Endothelial cell of umbilical vein (primary cell): ENCODE measurements at regions of chr19 and their contacts with region 1.

Region 1: GRCh38 chr19:33406521-33407139 is 33.1 kb downstream of the CEBPG start:
- DNase-seq: peak; percentile 57
- H3K4me3 ChIP-seq: no peak overlapping the region
- H3K27ac ChIP-seq: no peak overlapping the region
- H3K4me1 ChIP-seq: no peaks in the 10 kb centered on the region
- H3K27me3 ChIP-seq: no peaks in the 10 kb centered on the region
- CTCF ChIP-seq: peak; percentile 85 to 89
- POLR2A ChIP-seq: no peak

Region 2: DNA sequence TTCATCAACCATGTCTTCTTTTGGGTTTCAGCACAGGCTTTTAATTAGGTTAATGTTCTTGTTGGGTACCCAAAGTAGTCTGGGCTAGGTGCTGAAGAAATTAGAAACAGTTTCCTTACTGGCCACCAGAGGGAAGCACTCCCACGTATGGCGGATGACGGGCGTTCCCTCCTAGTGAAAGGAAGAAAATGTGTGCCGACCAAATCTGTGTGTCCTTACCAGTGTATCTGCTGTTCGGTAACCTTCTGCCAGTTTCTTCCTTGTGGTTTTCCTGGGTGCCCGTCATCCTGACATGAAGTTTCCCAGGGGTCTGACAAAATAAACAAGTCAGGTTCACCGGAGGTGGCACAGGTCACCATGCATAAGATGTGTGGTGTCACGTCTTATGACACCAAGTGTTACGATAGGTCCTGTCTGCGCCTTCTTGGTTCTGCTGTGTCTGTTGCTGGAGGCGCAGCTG is 280.7 kb before region 1 on chr19:
- CTCF ChIA-PET with region 1: interaction called, 15 read pairs
- POLR2A ChIA-PET with region 1: no interaction called
- dilution Hi-C with region 1: no loop called
- intact Hi-C with region 1: loop called (anchors 5 kb)
- DNase-seq: peak; percentile 73
- H3K4me3 ChIP-seq: no peak overlapping the region
- H3K27ac ChIP-seq: no peak overlapping the region
- H3K4me1 ChIP-seq: no peaks in the 10 kb centered on the region
- H3K27me3 ChIP-seq: no peaks in the 10 kb centered on the region
- CTCF ChIP-seq: peak; percentile 83 to 87
- POLR2A ChIP-seq: no peak

Region 3: DNA sequence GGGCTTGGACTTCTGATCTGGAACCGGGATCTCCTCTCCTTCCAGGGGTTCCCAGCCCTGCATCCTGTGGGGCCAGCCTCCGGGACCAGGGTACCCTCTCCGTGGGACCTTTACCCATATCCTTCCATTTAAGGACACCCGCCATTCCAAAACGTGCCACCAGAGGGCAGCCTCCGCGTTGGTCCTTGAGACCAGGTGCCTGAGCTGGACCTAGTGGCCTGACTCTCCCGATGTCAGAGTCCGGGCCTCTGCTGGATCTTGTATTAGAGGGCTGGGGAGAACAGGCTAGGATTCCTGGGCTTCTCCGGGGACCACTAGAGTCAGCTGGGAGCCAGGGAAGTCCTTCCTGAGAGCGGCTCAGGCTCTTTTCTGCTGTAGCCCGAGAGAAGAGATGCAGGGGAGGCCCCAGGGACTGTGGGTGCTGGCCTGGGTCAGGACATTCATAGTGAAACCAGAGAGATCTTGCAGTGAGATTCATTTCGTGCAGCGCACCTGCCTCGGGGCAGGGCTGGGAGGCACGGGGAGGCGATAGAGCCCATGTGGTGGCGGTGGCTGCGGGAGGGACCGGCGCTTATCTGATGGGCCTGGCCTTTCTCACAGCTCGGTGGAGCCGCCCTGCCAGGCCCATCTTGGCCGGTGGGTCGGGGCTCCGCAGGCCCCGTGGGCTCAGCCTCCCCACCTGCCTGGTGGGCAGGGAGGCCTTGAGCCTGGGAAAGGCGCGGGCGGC is 171.2 kb before region 1 on chr19:
- CTCF ChIA-PET with region 1: interaction called, 181 read pairs
- POLR2A ChIA-PET with region 1: no interaction called
- dilution Hi-C with region 1: no loop called
- intact Hi-C with region 1: loop called (anchors 1 kb)
- DNase-seq: peak; percentile 57
- H3K4me3 ChIP-seq: no peak overlapping the region
- H3K27ac ChIP-seq: no peak overlapping the region
- H3K4me1 ChIP-seq: no peaks in the 10 kb centered on the region
- H3K27me3 ChIP-seq: no peaks in the 10 kb centered on the region
- CTCF ChIP-seq: peak; percentile 84 to 89
- POLR2A ChIP-seq: no peak

Region 4: GRCh38 chr19:33280351-33280921 is 126.2 kb before region 1 on chr19:
- CTCF ChIA-PET with region 1: no interaction called
- POLR2A ChIA-PET with region 1: no interaction called
- dilution Hi-C with region 1: no loop called
- intact Hi-C with region 1: no loop called
- DNase-seq: no peak
- H3K4me3 ChIP-seq: no peak overlapping the region
- H3K27ac ChIP-seq: no peak overlapping the region
- H3K4me1 ChIP-seq: no peaks in the 10 kb centered on the region
- H3K27me3 ChIP-seq: no peaks in the 10 kb centered on the region
- CTCF ChIP-seq: no peak
- POLR2A ChIP-seq: no peak

Region 5: DNA sequence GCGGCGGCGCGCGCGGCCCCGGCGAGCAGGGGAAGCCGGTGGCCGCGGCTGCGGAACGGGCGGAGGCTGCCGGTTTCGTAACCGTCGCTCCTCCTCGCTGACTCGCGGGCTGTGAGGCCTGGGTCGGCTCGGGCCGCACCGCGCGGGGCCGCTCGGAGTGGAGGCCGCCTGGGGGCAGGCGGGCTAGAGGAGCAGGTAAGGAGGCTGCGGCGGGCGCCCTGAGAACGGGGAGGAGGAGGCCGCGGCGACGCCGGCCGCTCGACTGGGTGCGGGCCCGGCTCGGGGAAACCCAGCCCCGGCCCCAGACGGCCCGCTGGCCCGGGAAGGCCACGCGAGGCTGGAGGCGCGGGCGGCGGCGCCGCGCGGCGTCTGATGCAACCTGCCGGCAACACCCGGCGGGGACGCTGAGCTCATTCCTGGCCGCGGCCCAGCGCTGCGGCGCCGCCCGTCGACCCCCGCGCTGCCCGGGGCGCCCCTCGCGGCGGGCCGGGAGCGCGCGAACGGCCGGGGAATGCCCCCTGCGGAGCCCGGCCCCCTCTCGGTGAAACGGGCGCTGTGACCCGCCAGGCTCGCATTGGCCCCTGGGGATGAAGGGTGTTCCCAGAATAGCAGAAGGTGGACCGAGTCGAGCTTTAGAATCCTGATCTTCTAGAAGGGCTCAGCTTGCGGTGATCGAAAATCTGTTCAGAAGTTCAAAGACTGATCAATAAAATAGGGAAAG is 32.8 kb before region 1 on chr19 and contains the start of gene CEBPG:
- CTCF ChIA-PET with region 1: interaction called, 13 read pairs
- POLR2A ChIA-PET with region 1: no interaction called
- dilution Hi-C with region 1: no loop called
- intact Hi-C with region 1: loop called (anchors 2 kb)
- DNase-seq: peak; percentile 54
- H3K4me3 ChIP-seq: peak within 1 kb of the TSS; percentile 81 to 97 (median 94)
- H3K27ac ChIP-seq: peak within 1 kb of the TSS; percentile 96
- H3K4me1 ChIP-seq: peaks cover 46% of the 10 kb centered on the region
- H3K27me3 ChIP-seq: peaks cover 0 to 1% of the 10 kb centered on the region in 2 experiments
- CTCF ChIP-seq: peak; percentile 23 to 26
- POLR2A ChIP-seq: no peak
- total RNA-seq, gene CEBPG: 24.3 and 24.6 TPM in 2 replicates

Region 6: GRCh38 chr19:33472691-33473652 is 66.3 kb after region 1 on chr19:
- CTCF ChIA-PET with region 1: no interaction called
- POLR2A ChIA-PET with region 1: no interaction called
- dilution Hi-C with region 1: no loop called
- intact Hi-C with region 1: no loop called
- DNase-seq: peak; percentile 36
- H3K4me3 ChIP-seq: peak overlapping the region in 1 of 3 experiments; percentile 27
- H3K27ac ChIP-seq: peak overlapping the region; percentile 94
- H3K4me1 ChIP-seq: peaks cover 25% of the 10 kb centered on the region
- H3K27me3 ChIP-seq: no peaks in the 10 kb centered on the region
- CTCF ChIP-seq: no peak
- POLR2A ChIP-seq: no peak

Region 7: DNA sequence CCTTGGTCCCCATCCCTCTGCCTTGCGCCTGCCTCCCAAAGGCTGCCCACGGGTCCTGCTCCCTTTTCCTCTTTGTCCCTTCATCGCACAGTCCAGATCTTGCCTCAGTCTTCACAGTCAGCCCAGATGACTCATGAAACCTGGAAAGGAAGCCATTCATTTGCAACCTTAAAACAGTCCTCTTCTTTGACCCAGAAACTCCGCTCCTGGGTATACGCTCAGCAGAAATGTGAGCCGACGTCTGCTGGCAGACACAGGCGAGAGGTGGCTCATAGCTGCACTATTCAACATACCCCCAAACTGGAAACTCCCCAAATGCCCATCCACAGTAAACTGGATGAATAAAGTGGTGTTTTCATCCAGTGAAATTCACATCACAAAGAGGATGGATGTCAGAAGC is 128.6 kb after region 1 on chr19:
- CTCF ChIA-PET with region 1: no interaction called
- POLR2A ChIA-PET with region 1: no interaction called
- dilution Hi-C with region 1: no loop called
- intact Hi-C with region 1: no loop called
- DNase-seq: no peak
- H3K4me3 ChIP-seq: no peak overlapping the region
- H3K27ac ChIP-seq: no peak overlapping the region
- H3K4me1 ChIP-seq: no peaks in the 10 kb centered on the region
- H3K27me3 ChIP-seq: no peaks in the 10 kb centered on the region
- CTCF ChIP-seq: no peak
- POLR2A ChIP-seq: no peak

Region 8: GRCh38 chr19:33582914-33583313 is 176.3 kb after region 1 on chr19:
- CTCF ChIA-PET with region 1: no interaction called
- POLR2A ChIA-PET with region 1: no interaction called
- dilution Hi-C with region 1: no loop called
- intact Hi-C with region 1: no loop called
- DNase-seq: no peak
- H3K4me3 ChIP-seq: no peak overlapping the region
- H3K27ac ChIP-seq: no peak overlapping the region
- H3K4me1 ChIP-seq: no peaks in the 10 kb centered on the region
- H3K27me3 ChIP-seq: no peaks in the 10 kb centered on the region
- CTCF ChIP-seq: no peak
- POLR2A ChIP-seq: no peak

Region 9: DNA sequence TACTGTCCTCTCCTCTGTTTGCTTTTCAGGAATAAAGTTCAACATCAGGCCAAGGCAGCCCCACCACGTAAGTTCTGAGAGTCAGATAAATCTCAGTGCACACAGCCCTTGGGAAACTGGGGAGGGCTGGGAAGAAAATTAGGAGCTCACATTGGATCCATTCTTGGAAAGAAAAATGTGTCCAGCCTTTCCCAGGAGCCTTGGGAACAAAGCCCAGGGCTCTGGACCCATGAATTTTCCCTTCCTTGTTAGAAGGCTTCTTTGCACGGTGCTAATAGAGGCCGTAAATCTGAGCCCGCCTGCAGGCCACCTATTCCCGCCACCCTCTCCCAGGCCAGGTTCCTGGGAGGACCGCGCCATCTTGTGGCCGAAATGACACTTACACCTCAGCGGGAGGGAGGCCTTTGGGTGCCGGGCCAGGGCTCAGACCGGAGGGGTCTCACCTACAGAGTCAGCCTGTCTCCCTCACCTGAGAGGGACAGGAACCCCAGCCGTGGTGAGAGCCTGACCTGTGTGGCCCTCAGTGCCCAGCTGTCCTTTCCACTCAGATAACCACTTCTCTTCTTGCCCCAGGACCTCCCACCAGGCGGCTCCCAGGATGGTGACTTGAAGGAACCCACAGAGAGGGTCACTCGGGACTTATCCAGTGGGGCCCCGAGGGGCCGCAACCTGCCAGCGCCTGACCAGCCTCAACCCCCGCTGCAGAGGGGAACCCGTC is 364.9 kb after region 1 on chr19:
- CTCF ChIA-PET with region 1: interaction called, 200 read pairs
- POLR2A ChIA-PET with region 1: no interaction called
- dilution Hi-C with region 1: no loop called
- intact Hi-C with region 1: no loop called
- DNase-seq: peak; percentile 51
- H3K4me3 ChIP-seq: no peak overlapping the region
- H3K27ac ChIP-seq: no peak overlapping the region
- H3K4me1 ChIP-seq: no peaks in the 10 kb centered on the region
- H3K27me3 ChIP-seq: no peaks in the 10 kb centered on the region
- CTCF ChIP-seq: peak; percentile 76 to 82
- POLR2A ChIP-seq: no peak